Mucosa of descending colon (tissue), 3 donors: ENCODE measurements at regions of chr18 and their contacts with region 1.

Region 1: GRCh38 chr18:62425465-62426195 is 97.2 kb upstream of the ZCCHC2 start:
- DNase-seq: peak in 1 of 3 donors; percentile 92
- ATAC-seq: peak; percentile 85
- H3K4me3 ChIP-seq: no peak overlapping the region
- H3K4me1 ChIP-seq: no peaks in the 10 kb centered on the region
- CTCF ChIP-seq: peak; percentile 71

Region 2: DNA sequence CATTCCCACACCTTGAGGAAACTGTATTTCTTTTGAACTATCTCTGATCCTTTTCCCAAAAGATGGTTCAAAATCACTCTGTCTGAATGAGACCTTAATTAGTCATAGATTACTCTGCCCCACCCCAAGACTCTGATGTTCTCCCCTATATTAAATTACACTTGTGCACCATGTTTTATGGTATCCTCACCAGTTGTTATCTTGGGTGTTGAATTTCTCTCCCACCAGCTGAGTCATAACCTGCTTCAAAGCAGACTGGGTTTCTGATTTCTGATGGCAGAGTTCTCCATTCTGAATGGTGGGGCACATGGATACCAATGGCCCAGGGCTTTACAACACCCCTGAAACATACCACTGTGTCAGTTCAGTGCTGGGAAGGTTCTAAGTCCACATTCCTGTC is 1077.4 kb before region 1 on chr18:
- intact Hi-C with region 1: no loop called
- DNase-seq: no peak
- ATAC-seq: peak; percentile 22
- H3K4me3 ChIP-seq: no peak overlapping the region
- H3K4me1 ChIP-seq: no peaks in the 10 kb centered on the region
- CTCF ChIP-seq: no peak

Region 3: DNA sequence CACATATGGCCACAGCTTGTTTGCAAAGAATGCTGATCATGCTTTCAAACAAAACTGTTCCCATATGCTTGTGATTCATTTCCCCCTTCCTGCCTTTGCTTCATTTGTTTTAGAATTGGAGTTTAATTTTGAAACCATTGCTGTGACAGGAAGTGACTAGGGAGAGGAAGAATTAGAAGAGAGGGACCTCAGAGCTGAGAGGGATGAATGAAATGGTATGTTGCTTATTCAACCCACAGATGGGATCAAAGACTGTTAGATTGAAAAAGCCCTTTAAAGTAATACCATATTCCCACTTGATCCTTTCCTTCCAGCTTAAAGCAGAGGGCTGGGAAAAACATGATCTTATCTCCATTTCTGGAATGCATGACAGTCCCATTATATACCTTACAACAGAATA is 426.7 kb before region 1 on chr18:
- intact Hi-C with region 1: no loop called
- DNase-seq: no peak
- ATAC-seq: no peak
- H3K4me3 ChIP-seq: no peak overlapping the region
- H3K4me1 ChIP-seq: no peaks in the 10 kb centered on the region
- CTCF ChIP-seq: no peak

Region 4: DNA sequence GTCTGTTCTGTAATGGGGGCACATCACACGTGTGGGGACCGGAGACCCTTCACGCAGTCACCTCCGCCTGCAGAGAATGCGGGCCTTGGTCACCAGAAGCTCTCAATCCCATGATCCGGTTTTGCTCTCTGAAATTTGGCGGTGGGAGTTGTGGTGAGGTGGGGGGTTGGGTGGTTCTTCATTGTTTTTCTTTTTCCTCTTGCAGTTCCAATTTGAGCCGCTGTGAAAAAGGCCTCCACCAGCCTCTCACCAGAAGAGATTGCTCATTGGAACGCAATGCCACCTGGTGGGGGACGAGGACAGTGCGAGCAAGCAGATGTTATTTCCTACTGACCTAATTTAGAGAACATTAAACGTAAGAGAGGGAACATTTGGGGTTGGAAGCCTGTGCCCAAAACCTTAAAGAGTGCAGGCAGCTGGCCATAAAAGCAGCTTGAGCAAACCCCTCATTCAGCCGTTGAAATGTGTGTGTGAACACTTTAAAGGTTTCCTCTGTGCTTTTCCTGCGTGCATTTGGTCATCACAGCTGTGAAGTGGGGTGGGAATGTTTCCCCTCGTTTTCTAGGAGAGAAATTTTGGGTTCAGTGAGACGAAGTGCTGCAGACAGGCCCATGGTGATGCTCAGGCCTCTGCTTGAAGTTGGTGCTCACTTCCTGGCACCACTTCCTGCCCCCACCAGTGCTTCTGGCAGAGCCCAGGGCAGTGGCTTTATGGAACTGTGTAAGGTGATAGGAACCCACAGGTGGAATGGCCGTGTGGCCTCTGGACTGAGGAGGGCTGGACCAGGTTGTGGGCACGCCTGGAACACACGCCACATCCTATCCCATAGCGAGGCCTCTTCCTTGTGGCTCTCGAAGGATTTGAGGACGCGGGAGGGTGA is 158.9 kb after region 1 on chr18:
- intact Hi-C with region 1: loop called in 1 of 2 experiments (anchors 2 kb)
- DNase-seq: peak; percentile 75 to 94 (median 89)
- ATAC-seq: peak; percentile 95
- H3K4me3 ChIP-seq: no peak overlapping the region
- H3K4me1 ChIP-seq: peaks cover 5% of the 10 kb centered on the region
- CTCF ChIP-seq: peak; percentile 82

Region 5: GRCh38 chr18:62963507-62963906 is 537.9 kb after region 1 on chr18:
- intact Hi-C with region 1: no loop called
- DNase-seq: no peak
- ATAC-seq: peak; percentile 50
- H3K4me3 ChIP-seq: no peak overlapping the region
- H3K4me1 ChIP-seq: no peaks in the 10 kb centered on the region
- CTCF ChIP-seq: no peak